CD4-positive, alpha-beta memory T cell (primary cell): ENCODE measurements at regions of chr22 and their contacts with region 1.

Region 1: DNA sequence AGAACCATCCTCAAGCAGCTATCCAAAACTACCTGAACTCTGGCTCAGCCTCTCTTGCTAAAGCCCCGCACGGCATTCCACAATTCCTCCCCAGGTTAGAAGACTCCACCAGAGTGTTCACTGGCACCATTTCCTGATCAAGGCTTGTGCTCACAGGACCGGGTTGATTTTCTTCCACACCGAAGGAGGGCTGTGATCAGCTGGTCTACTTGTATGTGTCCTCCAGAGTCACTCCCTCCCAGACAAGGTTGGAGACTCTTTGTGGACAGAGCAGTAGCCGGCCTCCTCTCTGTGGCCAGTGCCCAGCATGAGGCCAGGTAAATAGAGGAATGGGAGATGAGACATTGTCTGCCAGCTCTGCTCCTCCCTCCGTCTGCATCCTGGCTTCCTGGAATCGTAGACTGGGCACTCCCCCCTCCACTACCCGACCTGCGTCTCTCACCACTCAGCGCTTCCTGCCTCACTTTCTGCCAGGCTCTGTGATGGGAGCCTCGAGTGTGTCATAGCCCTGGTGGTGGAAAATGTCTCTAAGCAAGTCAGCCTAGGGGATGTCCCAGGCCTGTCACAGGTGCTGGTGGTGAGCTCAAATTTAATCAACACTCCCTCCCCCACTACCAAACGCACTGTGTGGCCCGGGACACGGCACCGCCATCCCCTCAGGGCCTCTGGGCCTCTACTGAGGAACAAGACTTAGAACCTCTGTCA is 12.5 kb upstream of the TMPRSS6 start:
- DNase-seq: peak; percentile 92 to 99 (median 95)
- H3K4me3 ChIP-seq: peak overlapping the region in 1 of 2 donors; percentile 36
- H3K4me3 Mint-ChIP-seq: peak overlapping the region; percentile 76 to 90 (median 84)
- H3K27ac ChIP-seq: peak overlapping the region; percentile 98
- H3K27ac Mint-ChIP-seq: peak overlapping the region; percentile 98 to 100 (median 99)
- H3K4me1 ChIP-seq: peaks cover 58% of the 10 kb centered on the region
- H3K4me1 Mint-ChIP-seq: peaks cover 39 to 75% (median 54%) of the 10 kb centered on the region in 4 donors
- H3K27me3 ChIP-seq: no peaks in the 10 kb centered on the region
- H3K27me3 Mint-ChIP-seq: no peaks in the 10 kb centered on the region

Region 2: DNA sequence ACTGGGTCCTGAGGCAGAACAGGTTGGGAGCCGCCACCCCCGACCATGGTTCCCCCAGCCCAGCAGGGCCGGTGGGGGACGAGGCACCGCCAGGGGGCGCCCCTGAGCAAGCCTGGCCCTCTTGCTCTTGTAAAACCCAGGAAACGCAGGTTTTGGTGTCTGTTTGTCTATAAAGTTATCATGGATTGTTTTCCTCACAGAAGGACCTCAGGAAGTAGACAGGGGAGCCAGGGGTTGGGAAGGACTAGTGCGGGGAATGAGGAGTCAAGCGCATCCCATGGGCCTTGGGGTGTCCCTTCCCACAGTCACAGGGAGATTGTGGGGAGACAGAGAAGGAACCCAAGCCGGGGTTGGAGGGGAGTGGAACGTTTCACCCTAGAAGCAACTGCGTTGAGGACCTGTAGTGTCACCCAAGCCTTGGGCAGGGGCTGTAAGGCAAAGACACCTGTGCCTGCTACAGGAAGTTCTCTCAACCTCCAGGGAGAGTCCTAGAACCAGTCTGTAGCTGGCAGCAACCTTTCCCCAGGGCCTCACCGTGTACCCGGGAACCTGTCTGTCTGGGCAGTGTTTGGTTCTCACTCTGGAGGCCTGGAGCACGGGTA is 44.1 kb before region 1 on chr22:
- CTCF ChIA-PET with region 1: interaction called, 31 read pairs
- POLR2A ChIA-PET with region 1: interaction called, 45 read pairs
- intact Hi-C with region 1: loop called (anchors 1 kb)
- DNase-seq: peak; percentile 76 to 85 (median 81)
- H3K4me3 ChIP-seq: no peak overlapping the region
- H3K4me3 Mint-ChIP-seq: peak overlapping the region in 7 of 8 donors; percentile 2 to 73 (median 58)
- H3K27ac ChIP-seq: peak overlapping the region; percentile 44
- H3K27ac Mint-ChIP-seq: peak overlapping the region; percentile 93 to 100 (median 99)
- H3K4me1 ChIP-seq: peaks cover 34% of the 10 kb centered on the region
- H3K4me1 Mint-ChIP-seq: peaks cover 26 to 52% (median 39%) of the 10 kb centered on the region in 4 donors
- H3K27me3 ChIP-seq: no peaks in the 10 kb centered on the region
- H3K27me3 Mint-ChIP-seq: peaks cover 4 to 5% of the 10 kb centered on the region in 2 donors

Region 3: DNA sequence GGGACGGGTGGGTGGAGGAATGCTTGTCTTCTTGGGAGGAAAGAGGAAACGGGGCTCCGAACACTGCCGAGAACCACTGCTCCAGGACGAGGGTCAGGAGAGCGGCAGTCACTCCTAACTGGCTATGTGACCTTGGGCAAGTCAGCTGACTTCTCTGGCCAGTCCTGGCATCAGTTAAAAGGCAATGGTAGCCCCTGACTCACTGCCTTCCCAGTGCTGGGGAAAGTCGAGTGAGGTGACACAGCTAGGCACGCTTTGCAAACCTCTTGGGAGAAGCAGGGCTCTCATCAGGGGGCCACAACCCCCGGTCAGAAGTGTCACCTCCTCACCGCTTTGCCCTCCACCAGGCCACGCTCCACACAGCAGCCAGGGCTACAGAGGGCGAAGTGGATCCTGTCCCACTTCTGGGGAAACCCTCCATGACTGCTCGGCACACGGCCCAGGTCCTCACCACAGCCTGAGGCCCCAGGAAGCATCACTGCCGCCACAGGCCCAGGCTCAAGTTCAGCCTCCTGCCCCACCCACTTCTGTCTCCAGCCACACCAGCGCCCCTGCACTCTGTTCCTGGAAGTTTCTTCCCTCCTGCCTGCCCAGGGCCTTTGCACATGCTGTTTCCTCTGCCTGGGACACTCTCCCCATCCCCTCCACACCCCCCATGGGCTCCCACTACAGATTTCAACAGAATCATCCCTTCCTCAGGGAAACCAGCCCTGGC is 11.4 kb after region 1 on chr22:
- CTCF ChIA-PET with region 1: interaction called, 4 read pairs
- POLR2A ChIA-PET with region 1: interaction called, 58 read pairs
- intact Hi-C with region 1: no loop called
- DNase-seq: no peak
- H3K4me3 ChIP-seq: no peak overlapping the region
- H3K4me3 Mint-ChIP-seq: no peak overlapping the region
- H3K27ac ChIP-seq: peak overlapping the region; percentile 1
- H3K27ac Mint-ChIP-seq: peak overlapping the region in 6 of 7 donors; percentile 48 to 87 (median 77)
- H3K4me1 ChIP-seq: no peaks in the 10 kb centered on the region
- H3K4me1 Mint-ChIP-seq: peaks cover 0 to 13% (median 6%) of the 10 kb centered on the region in 4 donors
- H3K27me3 ChIP-seq: no peaks in the 10 kb centered on the region
- H3K27me3 Mint-ChIP-seq: no peaks in the 10 kb centered on the region

Region 4: DNA sequence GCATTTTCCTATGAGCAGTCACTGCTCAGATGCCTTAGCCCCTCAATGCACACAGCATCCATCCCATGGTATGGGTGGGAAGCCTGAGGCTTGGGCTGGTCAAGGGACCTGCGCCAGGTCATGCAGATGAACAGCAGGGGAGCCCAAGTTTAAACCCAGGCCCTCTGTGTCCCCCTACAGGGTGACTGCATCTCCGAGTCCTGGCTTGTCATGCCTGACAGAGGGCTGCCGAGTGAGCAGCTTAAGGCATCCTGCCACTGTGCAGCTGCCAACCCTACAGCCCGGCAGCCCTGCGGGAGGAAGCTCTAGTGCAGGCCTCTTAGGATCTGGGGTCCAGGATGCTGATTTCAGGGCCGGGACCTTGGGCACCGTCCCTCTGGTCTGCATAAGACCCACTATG is 17.7 kb after region 1 on chr22:
- CTCF ChIA-PET with region 1: interaction called, 55 read pairs
- POLR2A ChIA-PET with region 1: interaction called, 217 read pairs
- intact Hi-C with region 1: no loop called
- DNase-seq: no peak
- H3K4me3 ChIP-seq: no peak overlapping the region
- H3K4me3 Mint-ChIP-seq: no peak overlapping the region
- H3K27ac ChIP-seq: no peak overlapping the region
- H3K27ac Mint-ChIP-seq: peak overlapping the region in 3 of 7 donors; percentile 73 to 78 (median 73)
- H3K4me1 ChIP-seq: peaks cover 28% of the 10 kb centered on the region
- H3K4me1 Mint-ChIP-seq: peaks cover 7 to 39% (median 15%) of the 10 kb centered on the region in 4 donors
- H3K27me3 ChIP-seq: no peaks in the 10 kb centered on the region
- H3K27me3 Mint-ChIP-seq: no peaks in the 10 kb centered on the region

Region 5: GRCh38 chr22:37193629-37194191 is 71.7 kb after region 1 on chr22:
- CTCF ChIA-PET with region 1: interaction called, 7 read pairs
- POLR2A ChIA-PET with region 1: interaction called, 46 read pairs
- intact Hi-C with region 1: loop called (anchors 1 kb)
- DNase-seq: peak; percentile 41 to 63 (median 45)
- H3K4me3 ChIP-seq: no peak overlapping the region
- H3K4me3 Mint-ChIP-seq: peak overlapping the region; percentile 49 to 82 (median 60)
- H3K27ac ChIP-seq: peak overlapping the region; percentile 17
- H3K27ac Mint-ChIP-seq: peak overlapping the region; percentile 68 to 95 (median 90)
- H3K4me1 ChIP-seq: peaks cover 51% of the 10 kb centered on the region
- H3K4me1 Mint-ChIP-seq: peaks cover 18 to 55% (median 33%) of the 10 kb centered on the region in 4 donors
- H3K27me3 ChIP-seq: no peaks in the 10 kb centered on the region
- H3K27me3 Mint-ChIP-seq: no peaks in the 10 kb centered on the region